T-cell (primary cell): ENCODE measurements at regions of chr1 and their contacts with region 1.

Region 1: DNA sequence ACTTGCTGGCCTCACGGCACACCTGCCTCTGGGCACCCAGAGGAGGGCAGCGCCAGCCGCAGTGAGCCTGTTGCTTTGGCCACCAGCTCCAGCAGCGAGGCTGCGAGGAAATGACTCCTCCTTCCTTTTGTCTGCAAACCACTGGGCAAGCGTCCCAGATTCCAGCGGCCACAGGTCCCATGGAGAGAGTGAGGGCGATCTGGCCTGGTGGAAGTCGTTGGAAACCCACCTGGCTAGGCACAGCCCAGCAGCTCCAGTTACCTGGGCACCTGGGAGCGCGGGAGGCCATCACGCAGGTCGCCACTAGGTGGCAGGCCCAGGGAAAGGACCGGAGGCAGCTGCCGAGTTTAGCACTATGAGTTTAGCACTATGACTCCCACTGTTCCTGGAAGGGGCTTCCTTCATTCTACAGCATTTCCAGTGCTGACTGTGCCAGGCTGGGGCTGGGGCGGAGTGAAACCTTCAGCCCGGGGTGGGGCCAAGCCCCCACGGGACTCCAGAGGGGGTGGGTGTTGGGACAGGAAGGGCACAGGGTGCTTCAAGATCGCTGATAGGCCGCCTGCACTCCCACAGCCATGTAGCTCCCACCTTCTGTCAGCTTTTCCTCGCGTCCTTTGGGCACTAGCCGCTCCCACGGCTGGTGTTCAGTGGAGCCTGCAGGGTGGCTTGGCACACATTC is 1.1 kb upstream of the ESPN start:
- DNase-seq: peak; percentile 36 to 82 (median 61)
- ATAC-seq: peak; percentile 71 to 83 (median 74)
- H3K4me3 ChIP-seq: peak overlapping the region; percentile 16 to 52
- H3K4me3 Mint-ChIP-seq: peak overlapping the region; percentile 37 to 73 (median 50)
- H3K27ac ChIP-seq: no peak overlapping the region
- H3K27ac Mint-ChIP-seq: no peak overlapping the region
- H3K4me1 ChIP-seq: peaks cover 3 to 46% of the 10 kb centered on the region in 2 experiments
- H3K4me1 Mint-ChIP-seq: peaks cover 6 to 21% (median 14%) of the 10 kb centered on the region in 3 donors
- H3K27me3 ChIP-seq: peaks cover 0 to 88% of the 10 kb centered on the region in 2 experiments
- H3K27me3 Mint-ChIP-seq: peaks cover 27 to 42% of the 10 kb centered on the region in 2 donors

Region 2: GRCh38 chr1:6331543-6332273 is 91.8 kb before region 1 on chr1:
- CTCF ChIA-PET with region 1: no interaction called
- POLR2A ChIA-PET with region 1: no interaction called
- DNase-seq: no peak
- ATAC-seq: no peak
- H3K4me3 ChIP-seq: no peak overlapping the region
- H3K4me3 Mint-ChIP-seq: no peak overlapping the region
- H3K27ac ChIP-seq: no peak overlapping the region
- H3K27ac Mint-ChIP-seq: no peak overlapping the region
- H3K4me1 ChIP-seq: no peaks in the 10 kb centered on the region
- H3K4me1 Mint-ChIP-seq: no peaks in the 10 kb centered on the region
- H3K27me3 ChIP-seq: no peaks in the 10 kb centered on the region
- H3K27me3 Mint-ChIP-seq: no peaks in the 10 kb centered on the region

Region 3: DNA sequence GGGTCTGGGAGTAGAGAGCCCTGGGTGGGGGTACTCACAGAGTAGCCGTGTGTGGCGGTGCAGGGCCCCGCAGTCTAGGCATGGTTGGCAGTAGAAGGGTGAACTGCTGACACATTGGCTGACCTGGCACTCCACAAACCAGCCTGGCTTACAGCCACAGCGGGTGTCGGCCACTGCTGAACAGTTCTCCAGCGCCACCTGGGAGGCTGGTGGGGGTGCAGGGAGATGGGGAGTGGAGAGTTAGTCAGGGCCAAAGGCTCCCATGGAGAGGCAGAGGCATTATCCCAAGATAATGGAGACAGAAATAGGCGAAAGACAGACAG is 41.0 kb after region 1 on chr1:
- CTCF ChIA-PET with region 1: interaction called in 1 of 2 experiments, 5 read pairs
- POLR2A ChIA-PET with region 1: interaction called in 1 of 2 experiments, 14 read pairs
- DNase-seq: peak in 5 of 35 experiments; percentile 34 to 64 (median 54)
- ATAC-seq: no peak
- H3K4me3 ChIP-seq: peak overlapping the region; percentile 87 to 90
- H3K4me3 Mint-ChIP-seq: peak overlapping the region; percentile 91 to 97 (median 92)
- H3K27ac ChIP-seq: peak overlapping the region; percentile 93
- H3K27ac Mint-ChIP-seq: peak overlapping the region; percentile 92 to 97
- H3K4me1 ChIP-seq: peaks cover 33 to 76% of the 10 kb centered on the region in 2 experiments
- H3K4me1 Mint-ChIP-seq: peaks cover 43 to 58% (median 48%) of the 10 kb centered on the region in 3 donors
- H3K27me3 ChIP-seq: peaks cover 0 to 12% of the 10 kb centered on the region in 2 experiments
- H3K27me3 Mint-ChIP-seq: no peaks in the 10 kb centered on the region